Caco-2 (cell line): ENCODE measurements at regions of chr2 and their contacts with region 1.

Region 1: GRCh38 chr2:37414470-37414949 is 70.1 kb downstream of the QPCT start:
- DNase-seq: peak in 1 of 2 experiments; percentile 51
- H3K4me3 ChIP-seq: no peak overlapping the region
- H3K4me3 Mint-ChIP-seq: no peak overlapping the region
- H3K27ac Mint-ChIP-seq: no peak overlapping the region
- H3K4me1 ChIP-seq: peaks cover 9% of the 10 kb centered on the region; the same call in 1 of the 2 replicates
- H3K4me1 Mint-ChIP-seq: peaks cover 17% of the 10 kb centered on the region
- H3K27me3 ChIP-seq: no peaks in the 10 kb centered on the region
- H3K27me3 Mint-ChIP-seq: no peaks in the 10 kb centered on the region
- CTCF ChIP-seq: peak; percentile 88 to 92

Region 2: DNA sequence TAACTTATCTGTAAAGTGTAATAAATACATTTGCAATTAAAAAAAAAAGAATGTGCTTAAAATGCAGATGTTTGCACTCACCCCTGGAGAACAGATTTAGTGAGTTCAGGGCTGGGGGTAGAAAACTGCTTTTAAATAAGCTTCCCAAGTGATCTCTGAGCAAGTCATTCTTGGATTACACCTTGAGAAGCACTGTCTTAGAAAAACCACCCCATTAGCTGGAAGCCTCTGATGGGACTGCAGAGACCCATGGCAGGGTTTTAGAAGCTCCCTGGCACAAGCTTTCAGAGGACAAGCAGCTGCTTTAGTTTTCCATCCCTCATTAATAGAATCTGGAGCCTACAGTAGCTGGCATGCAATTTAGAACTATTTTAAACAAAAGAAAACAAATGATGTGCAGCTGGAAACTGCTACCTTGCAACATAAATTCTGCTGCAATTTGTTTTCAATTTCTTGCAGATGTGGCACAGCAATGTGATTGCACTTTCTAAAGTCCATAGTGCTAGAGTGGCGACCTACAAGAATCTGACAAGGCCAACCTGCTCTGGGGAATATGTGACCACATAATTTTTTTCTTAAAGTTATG is 115.4 kb after region 1 on chr2:
- CTCF ChIA-PET with region 1: interaction called, 10 read pairs
- POLR2A ChIA-PET with region 1: no interaction called
- intact Hi-C with region 1: no loop called
- DNase-seq: no peak
- H3K4me3 ChIP-seq: no peak overlapping the region
- H3K4me3 Mint-ChIP-seq: no peak overlapping the region
- H3K27ac Mint-ChIP-seq: no peak overlapping the region
- H3K4me1 ChIP-seq: no peaks in the 10 kb centered on the region
- H3K4me1 Mint-ChIP-seq: peaks cover 10% of the 10 kb centered on the region
- H3K27me3 ChIP-seq: no peaks in the 10 kb centered on the region
- H3K27me3 Mint-ChIP-seq: no peaks in the 10 kb centered on the region
- CTCF ChIP-seq: no peak

Region 3: GRCh38 chr2:37570773-37571586 is 156.5 kb after region 1 on chr2:
- CTCF ChIA-PET with region 1: interaction called, 5 read pairs
- POLR2A ChIA-PET with region 1: no interaction called
- intact Hi-C with region 1: loop called (anchors 2 kb)
- DNase-seq: peak in 1 of 2 experiments; percentile 69
- H3K4me3 ChIP-seq: no peak overlapping the region
- H3K4me3 Mint-ChIP-seq: peak overlapping the region; percentile 35
- H3K27ac Mint-ChIP-seq: peak overlapping the region; percentile 92
- H3K4me1 ChIP-seq: peaks cover 42% of the 10 kb centered on the region
- H3K4me1 Mint-ChIP-seq: peaks cover 52% of the 10 kb centered on the region
- H3K27me3 ChIP-seq: no peaks in the 10 kb centered on the region
- H3K27me3 Mint-ChIP-seq: no peaks in the 10 kb centered on the region
- CTCF ChIP-seq: no peak

Region 4: DNA sequence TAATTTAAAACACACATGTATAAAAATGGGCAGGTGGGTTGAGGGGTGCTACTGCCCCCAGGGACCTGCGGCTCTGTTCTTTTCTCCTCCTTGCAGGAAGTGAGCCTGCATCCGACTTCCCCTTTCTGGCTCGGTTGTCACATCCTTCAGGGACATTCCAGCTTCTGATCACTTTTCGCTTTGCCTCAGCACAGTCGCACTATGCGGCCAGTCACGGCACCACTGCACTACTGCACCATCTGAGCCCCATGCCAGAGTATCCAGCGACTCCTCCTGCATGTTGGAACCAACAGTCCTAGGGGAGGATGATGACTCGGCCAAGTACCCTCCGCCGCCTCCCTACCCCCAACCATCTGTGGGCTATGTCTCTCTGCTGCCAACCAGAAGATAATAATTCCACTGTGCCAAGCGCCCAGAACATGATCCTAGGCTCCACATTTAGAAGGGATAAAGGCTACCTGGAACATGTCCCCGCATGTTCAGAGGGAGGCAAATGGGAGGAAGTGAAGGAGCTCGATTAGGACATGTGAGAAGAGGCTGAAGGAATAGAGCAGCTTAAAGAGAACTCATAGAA is 239.4 kb after region 1 on chr2:
- CTCF ChIA-PET with region 1: interaction called, 11 read pairs
- POLR2A ChIA-PET with region 1: no interaction called
- intact Hi-C with region 1: no loop called
- DNase-seq: no peak
- H3K4me3 ChIP-seq: no peak overlapping the region
- H3K4me3 Mint-ChIP-seq: no peak overlapping the region
- H3K27ac Mint-ChIP-seq: peak overlapping the region; percentile 68
- H3K4me1 ChIP-seq: peaks cover 67% of the 10 kb centered on the region
- H3K4me1 Mint-ChIP-seq: peaks cover 73% of the 10 kb centered on the region
- H3K27me3 ChIP-seq: no peaks in the 10 kb centered on the region
- H3K27me3 Mint-ChIP-seq: no peaks in the 10 kb centered on the region
- CTCF ChIP-seq: no peak

Region 5: GRCh38 chr2:37809525-37809924 is 395.0 kb after region 1 on chr2:
- CTCF ChIA-PET with region 1: interaction called, 4 read pairs
- POLR2A ChIA-PET with region 1: no interaction called
- intact Hi-C with region 1: loop called (anchors 1 kb)
- DNase-seq: peak in 1 of 2 experiments; percentile 21
- H3K4me3 ChIP-seq: no peak overlapping the region
- H3K4me3 Mint-ChIP-seq: no peak overlapping the region
- H3K27ac Mint-ChIP-seq: no peak overlapping the region
- H3K4me1 ChIP-seq: peaks cover 7% of the 10 kb centered on the region
- H3K4me1 Mint-ChIP-seq: peaks cover 20% of the 10 kb centered on the region
- H3K27me3 ChIP-seq: no peaks in the 10 kb centered on the region
- H3K27me3 Mint-ChIP-seq: no peaks in the 10 kb centered on the region
- CTCF ChIP-seq: peak; percentile 36 to 38

Region 6: DNA sequence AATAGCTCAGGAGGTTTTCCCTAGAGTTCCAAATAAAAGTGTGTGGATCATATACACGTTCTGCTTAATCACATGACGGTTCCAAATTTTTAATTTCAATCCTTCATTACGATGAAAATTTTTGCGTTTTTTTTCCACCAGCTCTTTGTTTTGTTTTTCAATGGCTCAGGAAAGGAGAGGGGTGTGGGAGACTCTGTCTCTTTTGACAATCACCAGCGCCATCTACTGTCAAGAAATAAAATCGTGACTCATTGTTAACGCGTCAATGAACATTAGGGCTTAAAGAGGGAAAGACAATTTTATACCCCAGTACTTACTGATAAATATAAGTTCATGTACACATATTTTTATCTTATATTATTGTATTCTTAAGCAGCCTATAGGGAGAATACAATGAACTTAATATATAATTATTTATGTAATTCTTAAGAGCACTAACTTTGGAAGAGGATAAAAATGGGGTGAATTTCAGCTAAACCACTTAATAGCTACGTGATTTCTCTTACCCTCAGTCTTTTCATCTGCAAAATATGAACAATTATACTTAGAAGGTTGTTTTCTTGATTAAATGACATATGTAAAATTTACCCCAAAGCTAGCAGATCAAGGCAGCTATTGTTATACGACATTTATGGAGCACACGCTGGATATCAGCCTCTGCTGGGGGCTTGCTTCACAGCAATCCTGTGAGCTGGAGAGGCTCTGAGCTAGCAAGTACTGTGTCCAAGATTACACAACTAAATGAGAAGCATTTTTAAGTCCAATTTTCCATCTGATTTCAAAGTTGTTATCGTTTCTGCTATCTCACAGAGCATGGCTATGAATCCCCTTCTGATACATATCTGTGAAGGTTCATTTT is 463.2 kb after region 1 on chr2:
- CTCF ChIA-PET with region 1: interaction called, 94 read pairs
- POLR2A ChIA-PET with region 1: interaction called, 5 read pairs
- intact Hi-C with region 1: loop called (anchors 1 kb)
- DNase-seq: peak in 1 of 2 experiments; percentile 74
- H3K4me3 ChIP-seq: no peak overlapping the region
- H3K4me3 Mint-ChIP-seq: no peak overlapping the region
- H3K27ac Mint-ChIP-seq: no peak overlapping the region
- H3K4me1 ChIP-seq: no peaks in the 10 kb centered on the region; the same call in 1 of the 2 replicates
- H3K4me1 Mint-ChIP-seq: peaks cover 9% of the 10 kb centered on the region
- H3K27me3 ChIP-seq: no peaks in the 10 kb centered on the region
- H3K27me3 Mint-ChIP-seq: no peaks in the 10 kb centered on the region
- CTCF ChIP-seq: peak; percentile 68 to 80